ENCODE measurements at regions of chr9 and their contacts with region 1.

Region 1: DNA sequence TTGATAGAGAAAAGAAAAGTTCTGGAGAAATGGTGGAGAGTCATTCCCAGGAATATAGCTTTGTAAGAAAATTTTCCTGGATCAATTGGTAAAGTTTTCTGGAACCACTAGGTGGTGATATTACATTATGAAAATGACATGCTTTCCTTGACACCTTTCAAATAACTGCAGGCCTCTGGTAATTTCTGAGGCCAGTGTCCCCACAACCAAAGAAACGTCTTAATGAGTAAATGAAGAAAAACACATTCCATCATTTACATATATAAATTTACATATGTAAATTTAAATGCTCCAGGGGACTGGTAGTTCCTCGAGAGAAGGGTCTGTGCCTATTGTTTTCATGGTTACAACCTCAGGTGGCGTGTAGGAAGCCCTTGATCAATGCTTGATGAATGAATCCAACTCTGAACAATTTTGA is 17.2 kb upstream of the RGS3 start:
- DNase-seq: no peak
- H3K4me3 ChIP-seq: no peak overlapping the region
- H3K27ac ChIP-seq: no peak overlapping the region
- H3K4me1 ChIP-seq: peaks cover 0 to 5% of the 10 kb centered on the region in 2 donors
- H3K27me3 ChIP-seq: no peaks in the 10 kb centered on the region
- CTCF ChIP-seq: peak; percentile 47 to 80 (median 64)
- POLR2A ChIP-seq: no peak

Region 2: GRCh38 chr9:113255438-113255837 is 190.9 kb before region 1 on chr9:
- intact Hi-C with region 1: no loop called
- DNase-seq: no peak
- H3K4me3 ChIP-seq: no peak overlapping the region
- H3K27ac ChIP-seq: no peak overlapping the region
- H3K4me1 ChIP-seq: no peaks in the 10 kb centered on the region
- H3K27me3 ChIP-seq: no peaks in the 10 kb centered on the region
- CTCF ChIP-seq: no peak
- POLR2A ChIP-seq: no peak

Region 3: DNA sequence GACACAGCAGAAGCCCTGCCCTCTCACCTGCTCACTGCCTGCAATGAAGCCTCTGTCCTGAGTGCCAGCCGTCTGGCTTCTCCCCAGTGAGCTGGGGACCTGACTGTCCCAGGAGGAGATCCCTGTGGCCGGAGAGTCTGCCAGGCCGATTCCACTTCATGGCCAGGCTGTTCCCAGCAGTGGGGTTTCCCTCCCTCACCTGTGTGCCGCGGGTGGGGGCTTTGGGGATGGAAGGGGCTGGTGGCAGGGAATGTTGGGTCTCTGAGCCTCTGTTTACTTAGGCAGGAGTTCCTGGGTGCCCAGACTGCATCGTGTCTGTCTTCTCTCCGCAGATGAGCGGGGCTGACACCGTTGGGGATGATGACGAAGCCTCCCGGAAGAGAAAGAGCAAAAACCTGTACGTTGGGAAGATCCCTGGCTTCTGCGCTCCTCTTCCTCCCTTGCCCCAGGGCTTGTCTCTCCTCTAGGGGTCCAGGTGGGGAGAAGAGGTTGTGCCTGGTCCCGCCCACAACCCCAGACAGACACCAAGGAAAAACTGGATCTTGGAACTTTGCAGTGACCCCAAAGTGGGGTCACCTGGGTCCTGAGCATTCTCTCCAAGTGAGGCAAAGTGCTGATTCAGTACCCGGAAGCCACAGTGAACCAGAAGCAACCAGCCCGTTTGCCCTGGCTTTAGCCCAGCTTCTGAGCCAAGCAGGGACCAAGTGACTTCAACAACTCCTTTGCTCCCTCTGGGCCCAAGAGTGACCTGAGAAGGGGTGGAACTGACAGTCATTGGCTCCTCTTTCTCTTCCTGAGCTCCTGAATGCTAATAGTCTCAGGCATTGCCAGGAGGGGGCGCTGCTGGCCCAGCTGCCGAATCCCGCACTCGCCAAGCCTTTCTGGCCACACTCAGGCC is 144.9 kb after region 1 on chr9:
- intact Hi-C with region 1: loop called (anchors 2 kb)
- DNase-seq: peak; percentile 85
- H3K4me3 ChIP-seq: no peak overlapping the region
- H3K27ac ChIP-seq: peak overlapping the region; percentile 57 to 89 (median 78)
- H3K4me1 ChIP-seq: peaks cover 19 to 51% of the 10 kb centered on the region in 2 donors
- H3K27me3 ChIP-seq: no peaks in the 10 kb centered on the region
- CTCF ChIP-seq: peak; percentile 74 to 88 (median 84)
- POLR2A ChIP-seq: no peak

Region 4: DNA sequence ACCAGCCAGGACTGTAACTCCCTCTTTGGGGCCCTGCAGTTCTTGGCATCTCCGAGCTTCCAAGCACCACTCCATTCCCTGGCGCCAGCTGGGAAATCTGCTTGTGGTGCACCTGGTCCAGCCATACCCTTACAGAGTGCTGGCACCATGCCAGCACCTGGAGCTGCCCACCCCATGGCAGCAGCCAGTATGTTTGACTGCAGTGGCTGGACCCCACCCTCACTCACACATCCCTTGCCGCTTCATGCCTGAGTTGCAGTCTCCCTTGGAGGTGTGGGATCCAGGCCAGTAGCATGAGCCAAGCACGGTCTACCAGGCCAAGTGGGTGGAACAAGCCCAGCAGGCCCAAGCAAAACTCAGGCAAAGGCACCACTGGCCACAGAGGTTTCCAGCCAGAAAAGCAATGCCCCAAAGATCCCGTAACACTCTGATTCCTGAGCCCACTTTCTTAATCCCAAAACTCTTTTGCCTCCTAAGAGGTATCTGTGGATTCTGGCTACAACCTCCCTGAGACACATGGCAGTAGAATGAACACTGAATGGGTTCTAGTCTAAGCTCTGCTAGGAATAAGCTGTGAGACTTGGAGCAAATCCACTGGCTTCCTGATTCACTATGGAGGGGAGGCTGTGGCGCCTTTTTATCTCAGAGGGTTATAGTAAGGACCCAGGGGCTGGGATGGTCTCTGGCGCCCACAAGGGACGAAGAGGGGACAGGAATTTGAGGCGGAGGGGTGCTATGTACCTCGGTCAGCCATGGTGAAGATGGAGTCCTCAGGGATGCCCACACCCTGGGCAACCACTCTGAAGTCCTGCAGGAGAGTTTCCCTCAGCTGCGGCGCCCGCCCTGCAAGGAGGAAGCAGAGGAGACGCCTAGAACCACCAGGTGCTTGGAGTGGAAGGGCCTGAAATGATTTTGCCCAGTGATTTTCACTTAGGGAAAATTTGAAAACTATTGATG is 626.1 kb after region 1 on chr9:
- intact Hi-C with region 1: no loop called
- DNase-seq: peak; percentile 89 to 92
- H3K4me3 ChIP-seq: no peak overlapping the region
- H3K27ac ChIP-seq: peak overlapping the region; percentile 45 to 76 (median 57)
- H3K4me1 ChIP-seq: peaks cover 10 to 13% of the 10 kb centered on the region in 2 donors
- H3K27me3 ChIP-seq: no peaks in the 10 kb centered on the region
- CTCF ChIP-seq: no peak
- POLR2A ChIP-seq: no peak

Measured in thyroid gland (tissue), 4 donors.